Activated CD8-positive, alpha-beta T cell treated with anti-CD3 and anti-CD28 coated beads, Interleukin-2, amount 10 ng/mL, durations not matched to agents 7 days and 5 days (primary cell): ENCODE measurements at regions of chr9 and their contacts with region 1.

Region 1: DNA sequence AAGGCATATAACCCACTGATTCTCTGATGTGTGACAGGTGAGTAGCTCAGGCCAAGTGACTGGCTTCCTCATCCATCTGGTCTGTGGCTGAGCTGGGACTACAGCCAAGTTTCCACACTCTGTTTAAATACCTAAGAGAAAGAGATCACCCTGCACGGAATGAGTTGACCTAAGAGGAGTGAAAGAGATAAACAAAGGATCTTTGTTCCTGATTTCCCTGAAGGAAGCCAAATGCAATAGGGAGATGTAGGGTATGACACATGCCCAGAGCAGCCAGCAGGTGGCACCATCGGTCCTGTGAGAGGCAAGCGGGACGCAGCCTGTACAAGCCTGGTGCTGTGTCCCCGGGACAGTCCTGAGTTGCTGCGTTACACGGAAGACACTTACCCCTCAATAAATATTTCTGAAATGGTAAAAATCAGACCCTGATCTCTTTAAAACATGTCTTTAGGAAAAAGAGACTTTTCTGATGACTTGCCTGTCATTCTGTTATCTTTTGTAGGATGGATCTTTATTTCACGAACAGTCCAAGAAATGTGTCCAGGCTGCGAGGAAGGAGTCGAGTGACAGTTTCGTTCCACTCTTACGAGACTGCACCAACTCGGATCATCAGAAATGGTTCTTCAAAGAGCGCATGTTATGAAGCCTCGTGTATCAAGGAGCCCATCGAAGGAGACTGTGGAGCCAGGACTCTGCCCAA is 41.1 kb downstream of the GALNT12 start:
- DNase-seq: peak; percentile 86
- ATAC-seq: peak; percentile 95
- H3K4me3 Mint-ChIP-seq: no peak overlapping the region
- H3K27ac Mint-ChIP-seq: no peak overlapping the region
- H3K4me1 Mint-ChIP-seq: peaks cover 9% of the 10 kb centered on the region
- H3K27me3 Mint-ChIP-seq: no peaks in the 10 kb centered on the region

Region 2: GRCh38 chr9:98807070-98807810 is 41.4 kb before region 1 on chr9 and contains the start of gene GALNT12:
- CTCF ChIA-PET with region 1: interaction called, 11 read pairs
- POLR2A ChIA-PET with region 1: no interaction called
- DNase-seq: peak; percentile 64
- ATAC-seq: peak; percentile 83
- H3K4me3 Mint-ChIP-seq: peak within 1 kb of the TSS; percentile 82
- H3K27ac Mint-ChIP-seq: peak within 1 kb of the TSS; percentile 9
- H3K4me1 Mint-ChIP-seq: peaks cover 35% of the 10 kb centered on the region
- H3K27me3 Mint-ChIP-seq: peaks cover 28% of the 10 kb centered on the region
- total RNA-seq, gene GALNT12: 7.9 to 8.8 TPM

Region 3: DNA sequence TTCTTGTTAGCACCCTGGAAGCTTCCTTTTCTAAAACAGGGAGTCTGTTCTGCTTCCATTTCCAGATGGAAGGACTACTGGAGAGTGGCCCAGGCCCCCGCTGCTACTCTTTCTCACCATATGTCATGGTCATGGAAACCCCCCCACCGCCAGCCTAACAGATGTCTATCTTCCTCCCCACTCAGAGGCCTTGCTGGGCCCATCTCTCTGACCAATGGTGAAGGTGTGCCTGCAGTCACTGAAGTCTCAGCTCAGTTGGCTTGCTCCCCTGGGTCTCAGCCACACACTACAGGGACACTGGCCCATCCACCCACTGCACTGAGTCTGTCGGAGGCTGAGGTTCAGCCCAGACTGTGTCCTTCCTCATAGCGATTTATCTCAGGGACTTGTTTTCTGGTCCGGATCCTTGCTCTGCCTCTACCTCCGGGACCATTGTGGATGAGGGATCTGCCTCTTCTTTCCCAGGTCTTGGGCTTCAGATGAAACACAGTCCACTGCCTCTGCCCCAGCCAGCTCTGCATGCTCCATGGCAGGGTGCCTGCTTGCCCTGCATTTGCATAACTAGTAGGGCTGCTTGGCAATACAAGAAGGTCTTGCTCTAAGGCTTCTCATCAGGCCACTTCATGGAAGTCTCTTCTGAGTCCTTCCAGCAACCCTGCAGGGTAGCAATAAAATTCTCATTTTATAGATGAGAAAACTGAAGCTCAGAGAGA is 10.3 kb before region 1 on chr9:
- CTCF ChIA-PET with region 1: interaction called, 28 read pairs
- POLR2A ChIA-PET with region 1: no interaction called
- DNase-seq: no peak
- ATAC-seq: no peak
- H3K4me3 Mint-ChIP-seq: no peak overlapping the region
- H3K27ac Mint-ChIP-seq: no peak overlapping the region
- H3K4me1 Mint-ChIP-seq: no peaks in the 10 kb centered on the region
- H3K27me3 Mint-ChIP-seq: no peaks in the 10 kb centered on the region

Region 4: GRCh38 chr9:98860871-98861293 is 12.3 kb after region 1 on chr9:
- CTCF ChIA-PET with region 1: interaction called, 28 read pairs
- POLR2A ChIA-PET with region 1: interaction called, 3 read pairs
- DNase-seq: no peak
- ATAC-seq: no peak
- H3K4me3 Mint-ChIP-seq: no peak overlapping the region
- H3K27ac Mint-ChIP-seq: no peak overlapping the region
- H3K4me1 Mint-ChIP-seq: no peaks in the 10 kb centered on the region
- H3K27me3 Mint-ChIP-seq: peaks cover 26% of the 10 kb centered on the region

Region 5: GRCh38 chr9:98974994-98975712 is 126.6 kb after region 1 on chr9:
- CTCF ChIA-PET with region 1: interaction called, 13 read pairs
- POLR2A ChIA-PET with region 1: no interaction called
- DNase-seq: peak; percentile 87
- ATAC-seq: peak; percentile 96
- H3K4me3 Mint-ChIP-seq: peak overlapping the region; percentile 4
- H3K27ac Mint-ChIP-seq: no peak overlapping the region
- H3K4me1 Mint-ChIP-seq: peaks cover 16% of the 10 kb centered on the region
- H3K27me3 Mint-ChIP-seq: peaks cover 20% of the 10 kb centered on the region

Region 6: GRCh38 chr9:99231711-99232110 is 383.1 kb after region 1 on chr9:
- CTCF ChIA-PET with region 1: no interaction called
- POLR2A ChIA-PET with region 1: no interaction called
- DNase-seq: peak; percentile 61
- ATAC-seq: peak; percentile 71
- H3K4me3 Mint-ChIP-seq: no peak overlapping the region
- H3K27ac Mint-ChIP-seq: no peak overlapping the region
- H3K4me1 Mint-ChIP-seq: peaks cover 11% of the 10 kb centered on the region
- H3K27me3 Mint-ChIP-seq: no peaks in the 10 kb centered on the region